Natural killer cell (primary cell): ENCODE measurements at regions of chr7 and their contacts with region 1.

Region 1: GRCh38 chr7:101815835-101816493 is 1.5 kb upstream of the CUX1 start:
- DNase-seq: peak; percentile 64 to 86
- ATAC-seq: peak; percentile 77 to 87 (median 81)
- H3K4me3 ChIP-seq: peak overlapping the region; percentile 63
- H3K4me3 Mint-ChIP-seq: peak overlapping the region; percentile 90
- H3K27ac ChIP-seq: no peak overlapping the region
- H3K27ac Mint-ChIP-seq: peak overlapping the region in 1 of 2 donors; percentile 70
- H3K4me1 ChIP-seq: peaks cover 15% of the 10 kb centered on the region
- H3K4me1 Mint-ChIP-seq: peaks cover 21 to 29% of the 10 kb centered on the region in 2 donors
- H3K27me3 ChIP-seq: peaks cover 4% of the 10 kb centered on the region
- H3K27me3 Mint-ChIP-seq: no peaks in the 10 kb centered on the region
- CTCF ChIP-seq: no peak

Region 2: GRCh38 chr7:101743241-101743994 is 72.5 kb before region 1 on chr7:
- intact Hi-C with region 1: loop called (anchors 1 kb)
- DNase-seq: peak; percentile 51 to 77
- ATAC-seq: peak; percentile 64 to 80 (median 78)
- H3K4me3 ChIP-seq: peak overlapping the region; percentile 25
- H3K4me3 Mint-ChIP-seq: peak overlapping the region; percentile 77
- H3K27ac ChIP-seq: no peak overlapping the region
- H3K27ac Mint-ChIP-seq: no peak overlapping the region
- H3K4me1 ChIP-seq: peaks cover 39% of the 10 kb centered on the region
- H3K4me1 Mint-ChIP-seq: peaks cover 6 to 8% of the 10 kb centered on the region in 2 donors
- H3K27me3 ChIP-seq: no peaks in the 10 kb centered on the region
- H3K27me3 Mint-ChIP-seq: peaks cover 0 to 9% of the 10 kb centered on the region in 2 donors
- CTCF ChIP-seq: peak; percentile 63

Region 3: DNA sequence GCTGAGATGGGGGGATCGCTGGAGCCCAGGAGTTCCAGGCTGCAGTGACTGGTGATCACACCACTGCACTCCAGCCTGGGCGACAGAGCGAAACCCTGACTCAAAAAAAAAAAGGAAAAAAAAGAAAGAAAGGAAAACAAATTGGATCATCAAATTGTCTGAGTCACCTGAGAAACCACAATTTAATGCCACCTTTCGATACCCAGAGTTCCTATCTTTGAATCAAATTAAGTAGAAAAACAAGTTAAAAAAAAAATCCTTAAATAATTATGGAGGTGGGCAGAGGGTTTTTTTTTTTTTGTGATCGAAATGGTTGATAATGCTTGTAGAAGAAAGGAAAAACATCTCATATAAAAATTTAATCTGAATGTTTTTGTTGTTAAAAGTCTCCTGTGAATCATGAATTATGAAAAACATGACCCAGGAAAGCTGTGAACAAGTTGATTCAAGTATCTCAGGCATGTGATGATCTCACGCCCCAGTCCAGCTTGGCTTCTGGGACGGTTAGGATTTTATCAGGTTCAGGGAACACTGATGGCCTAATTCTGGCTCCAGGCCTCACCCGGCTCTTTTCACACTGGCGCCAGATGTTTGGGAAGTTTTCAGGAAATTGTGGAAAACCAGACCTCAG is 23.8 kb before region 1 on chr7:
- intact Hi-C with region 1: no loop called
- DNase-seq: no peak
- ATAC-seq: no peak
- H3K4me3 ChIP-seq: no peak overlapping the region
- H3K4me3 Mint-ChIP-seq: no peak overlapping the region
- H3K27ac ChIP-seq: no peak overlapping the region
- H3K27ac Mint-ChIP-seq: no peak overlapping the region
- H3K4me1 ChIP-seq: no peaks in the 10 kb centered on the region
- H3K4me1 Mint-ChIP-seq: no peaks in the 10 kb centered on the region
- H3K27me3 ChIP-seq: no peaks in the 10 kb centered on the region
- H3K27me3 Mint-ChIP-seq: peaks cover 3 to 4% of the 10 kb centered on the region in 2 donors
- CTCF ChIP-seq: no peak

Region 4: DNA sequence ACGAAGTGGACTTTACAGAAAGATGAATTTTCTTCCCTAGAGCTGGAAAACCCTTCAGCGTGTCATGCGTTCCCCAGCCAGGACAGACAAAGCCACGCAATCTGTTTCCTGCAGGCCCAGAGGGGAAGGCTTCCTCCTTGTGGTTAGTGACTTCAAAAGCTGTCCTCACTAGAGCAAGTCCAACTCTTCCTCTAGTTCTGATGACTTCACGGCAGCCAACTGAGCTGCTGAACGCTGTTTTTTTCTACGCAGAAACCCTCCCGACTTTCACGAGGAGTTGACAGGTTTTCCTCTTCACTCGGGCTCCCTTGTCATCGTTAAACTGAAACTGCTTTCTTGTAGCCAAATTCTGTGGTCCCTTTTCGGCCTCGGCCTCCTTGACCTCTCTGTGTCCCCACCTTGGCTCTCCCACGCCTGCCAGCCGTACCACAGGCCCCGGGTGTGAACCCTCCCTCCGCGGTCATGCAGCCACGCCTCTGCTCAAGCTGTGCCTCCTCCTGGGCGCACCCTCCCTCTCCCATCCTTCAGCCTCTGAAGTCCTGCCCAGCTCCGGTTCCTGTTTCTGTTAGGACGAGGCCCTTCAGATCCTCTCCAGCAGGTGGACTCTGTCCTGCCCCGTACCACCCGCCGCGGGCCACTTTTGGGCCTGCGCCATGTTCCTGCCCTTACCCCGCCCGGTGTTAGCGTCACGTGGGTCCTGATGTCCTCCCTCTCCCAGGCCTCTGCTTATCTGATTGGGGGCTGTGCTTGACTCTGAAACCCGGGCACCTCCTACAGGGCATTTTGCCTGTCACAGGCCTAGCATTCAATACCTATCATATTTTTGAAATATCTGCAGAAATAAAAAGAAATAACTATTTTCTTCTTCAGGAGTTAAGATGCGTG is 40.8 kb after region 1 on chr7:
- intact Hi-C with region 1: loop called (anchors 2 kb)
- DNase-seq: peak; percentile 79 to 88
- ATAC-seq: peak; percentile 89 to 94 (median 90)
- H3K4me3 ChIP-seq: peak overlapping the region; percentile 53
- H3K4me3 Mint-ChIP-seq: peak overlapping the region; percentile 94
- H3K27ac ChIP-seq: peak overlapping the region; percentile 94
- H3K27ac Mint-ChIP-seq: peak overlapping the region; percentile 94 to 99
- H3K4me1 ChIP-seq: peaks cover 33% of the 10 kb centered on the region
- H3K4me1 Mint-ChIP-seq: peaks cover 21 to 45% of the 10 kb centered on the region in 2 donors
- H3K27me3 ChIP-seq: no peaks in the 10 kb centered on the region
- H3K27me3 Mint-ChIP-seq: no peaks in the 10 kb centered on the region
- CTCF ChIP-seq: peak; percentile 46

Region 5: DNA sequence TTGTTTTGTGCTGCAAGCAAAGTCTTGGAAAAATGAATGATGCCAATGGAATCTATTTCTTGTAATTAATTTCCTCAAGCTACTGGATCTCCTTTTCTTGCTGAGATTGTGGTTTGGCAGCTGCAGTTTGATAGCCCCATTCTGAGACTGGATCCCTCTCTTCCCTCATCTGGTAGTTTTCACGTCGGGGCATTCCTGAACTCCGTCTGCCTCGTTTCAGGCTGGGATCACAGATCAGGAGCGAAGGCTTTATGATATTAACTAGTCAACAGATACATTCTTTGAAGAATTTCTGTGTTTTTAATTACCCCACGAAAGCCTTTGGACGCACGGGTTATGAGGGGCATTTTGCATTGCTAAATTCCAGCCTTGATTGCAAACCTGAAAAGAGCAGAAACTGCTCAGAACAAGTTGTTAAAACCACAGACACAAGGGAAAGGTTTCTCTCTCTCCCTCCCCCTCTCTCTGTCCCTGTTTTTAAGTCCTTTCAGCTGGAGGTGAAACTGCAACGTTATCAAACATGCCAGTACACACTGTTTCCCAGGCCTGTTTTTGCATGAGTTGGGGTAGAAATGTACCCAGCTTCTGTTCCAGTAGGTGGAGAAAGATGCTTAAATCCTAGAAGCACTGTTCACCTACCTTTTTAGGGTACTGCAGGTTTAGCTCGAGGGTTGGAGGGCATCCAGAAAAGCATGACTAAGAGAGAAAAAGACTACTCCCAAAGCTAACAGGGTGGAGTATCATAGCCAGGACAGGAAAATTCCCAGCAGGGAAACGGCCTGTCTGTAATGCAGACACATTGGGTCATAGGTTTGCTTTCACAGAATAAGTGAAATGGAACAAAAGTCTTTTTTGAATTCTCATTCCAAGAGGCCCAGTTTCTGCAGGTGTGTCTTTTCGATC is 125.8 kb after region 1 on chr7:
- intact Hi-C with region 1: no loop called
- DNase-seq: no peak
- ATAC-seq: no peak
- H3K4me3 ChIP-seq: no peak overlapping the region
- H3K4me3 Mint-ChIP-seq: no peak overlapping the region
- H3K27ac ChIP-seq: no peak overlapping the region
- H3K27ac Mint-ChIP-seq: no peak overlapping the region
- H3K4me1 ChIP-seq: no peaks in the 10 kb centered on the region
- H3K4me1 Mint-ChIP-seq: peaks cover 10 to 30% of the 10 kb centered on the region in 2 donors
- H3K27me3 ChIP-seq: no peaks in the 10 kb centered on the region
- H3K27me3 Mint-ChIP-seq: no peaks in the 10 kb centered on the region
- CTCF ChIP-seq: no peak